Psoas muscle (tissue), 8 donors: ENCODE measurements at regions of chr9 and their contacts with region 1.

Region 1: GRCh38 chr9:32841314-32841713 is 58.0 kb downstream of the TMEM215 start:
- DNase-seq: no peak
- ATAC-seq: no peak
- H3K4me3 ChIP-seq: no peak overlapping the region
- H3K27ac ChIP-seq: no peak overlapping the region
- H3K4me1 ChIP-seq: no peaks in the 10 kb centered on the region
- H3K27me3 ChIP-seq: no peaks in the 10 kb centered on the region
- CTCF ChIP-seq: no peak

Region 2: DNA sequence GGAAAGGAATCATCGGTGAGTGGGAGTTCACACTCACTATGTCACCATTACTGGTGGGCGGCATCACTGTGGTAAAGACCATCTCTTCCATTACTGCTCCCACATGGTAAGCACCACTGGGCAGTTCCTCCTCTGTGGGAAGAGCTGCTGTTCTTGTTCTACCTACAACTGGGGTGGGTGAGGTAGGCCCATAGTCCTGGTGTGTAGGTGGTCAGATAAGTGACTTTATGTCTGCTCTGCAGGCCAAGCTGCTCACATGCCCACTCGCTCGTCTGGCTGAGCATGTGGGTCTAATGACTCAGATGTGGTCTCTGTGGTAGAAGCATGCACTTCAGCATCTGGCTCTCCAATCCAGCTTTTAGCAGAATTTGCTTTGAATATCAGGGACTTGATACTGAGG is 25.0 kb after region 1 on chr9:
- intact Hi-C with region 1: loop called in 1 of 2 experiments (anchors 2 kb)
- DNase-seq: no peak
- ATAC-seq: no peak
- H3K4me3 ChIP-seq: no peak overlapping the region
- H3K27ac ChIP-seq: no peak overlapping the region
- H3K4me1 ChIP-seq: peaks cover 10% of the 10 kb centered on the region
- H3K27me3 ChIP-seq: no peaks in the 10 kb centered on the region
- CTCF ChIP-seq: no peak

Region 3: DNA sequence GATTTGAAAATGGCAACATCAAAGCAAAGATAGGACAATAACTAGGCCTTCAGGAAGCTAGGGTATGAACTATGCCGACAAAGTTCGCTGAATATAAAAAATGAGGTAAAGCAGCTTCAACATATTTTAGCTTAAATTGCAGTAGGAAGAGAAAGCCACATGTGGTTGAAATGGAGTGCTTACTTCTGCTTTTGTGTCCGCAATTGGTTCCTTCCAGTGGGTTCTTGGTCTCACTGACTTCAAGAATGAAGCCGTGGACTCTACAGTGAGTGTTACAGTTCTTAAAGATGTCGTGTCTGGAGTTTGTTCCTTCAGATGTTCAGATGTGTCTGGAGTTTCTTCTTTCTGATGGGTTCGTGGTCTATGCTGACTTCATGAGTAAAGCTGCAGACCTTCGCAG is 64.9 kb after region 1 on chr9:
- intact Hi-C with region 1: loop called in 1 of 2 experiments (anchors 10 kb)
- DNase-seq: no peak
- ATAC-seq: no peak
- H3K4me3 ChIP-seq: no peak overlapping the region
- H3K27ac ChIP-seq: no peak overlapping the region
- H3K4me1 ChIP-seq: no peaks in the 10 kb centered on the region
- H3K27me3 ChIP-seq: no peaks in the 10 kb centered on the region
- CTCF ChIP-seq: no peak